Dendritic cell treated with granulocyte-macrophage colony-stimulating factor and Interleukin-4, amounts not matched to agents 40 ng/mL and 50 ng/mL, for 4 days (primary cell): ENCODE measurements at regions of chrX and their contacts with region 1.

Region 1: DNA sequence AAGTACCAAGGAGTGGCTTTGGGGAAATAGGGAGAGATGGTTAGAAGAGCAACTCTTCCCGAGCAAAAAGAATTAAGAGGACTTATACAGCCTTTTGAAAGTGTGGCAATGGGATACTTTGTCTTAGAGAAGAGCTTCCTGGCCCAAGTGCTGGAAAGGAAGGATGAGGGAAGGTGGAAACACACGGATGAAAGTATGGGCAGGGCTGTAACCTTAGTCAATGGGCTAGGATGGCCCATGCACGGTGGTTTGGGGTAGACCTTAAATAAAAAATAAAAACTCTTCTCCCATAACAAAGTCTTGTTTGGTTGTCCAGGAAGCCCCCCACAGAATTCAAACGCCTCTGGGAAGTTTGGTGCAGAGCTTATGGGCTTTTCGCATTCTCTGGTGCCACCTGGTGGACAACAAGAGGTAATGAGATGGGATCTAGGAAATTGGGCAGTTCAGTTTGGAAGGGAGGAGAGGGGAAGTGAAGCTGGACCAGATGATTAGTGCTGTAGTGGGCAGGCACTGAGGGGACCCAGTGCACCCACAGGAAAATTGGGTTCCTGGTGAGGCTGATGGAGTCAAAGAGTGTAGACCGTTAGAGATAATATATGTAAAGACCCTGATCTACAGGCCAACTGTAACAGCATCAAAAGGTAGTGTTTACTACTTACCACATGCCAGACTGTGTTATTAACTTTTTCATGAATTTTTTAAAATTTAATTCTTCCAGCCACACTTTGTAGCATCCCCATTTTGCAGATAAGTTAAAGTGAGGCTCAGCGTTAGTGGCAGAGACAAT is 13.8 kb upstream of the ENOX2 start:
- H3K4me3 Mint-ChIP-seq: no peak overlapping the region
- H3K27ac Mint-ChIP-seq: no peak overlapping the region
- H3K4me1 Mint-ChIP-seq: no peaks in the 10 kb centered on the region
- H3K27me3 Mint-ChIP-seq: peaks cover 1% of the 10 kb centered on the region

Region 2: DNA sequence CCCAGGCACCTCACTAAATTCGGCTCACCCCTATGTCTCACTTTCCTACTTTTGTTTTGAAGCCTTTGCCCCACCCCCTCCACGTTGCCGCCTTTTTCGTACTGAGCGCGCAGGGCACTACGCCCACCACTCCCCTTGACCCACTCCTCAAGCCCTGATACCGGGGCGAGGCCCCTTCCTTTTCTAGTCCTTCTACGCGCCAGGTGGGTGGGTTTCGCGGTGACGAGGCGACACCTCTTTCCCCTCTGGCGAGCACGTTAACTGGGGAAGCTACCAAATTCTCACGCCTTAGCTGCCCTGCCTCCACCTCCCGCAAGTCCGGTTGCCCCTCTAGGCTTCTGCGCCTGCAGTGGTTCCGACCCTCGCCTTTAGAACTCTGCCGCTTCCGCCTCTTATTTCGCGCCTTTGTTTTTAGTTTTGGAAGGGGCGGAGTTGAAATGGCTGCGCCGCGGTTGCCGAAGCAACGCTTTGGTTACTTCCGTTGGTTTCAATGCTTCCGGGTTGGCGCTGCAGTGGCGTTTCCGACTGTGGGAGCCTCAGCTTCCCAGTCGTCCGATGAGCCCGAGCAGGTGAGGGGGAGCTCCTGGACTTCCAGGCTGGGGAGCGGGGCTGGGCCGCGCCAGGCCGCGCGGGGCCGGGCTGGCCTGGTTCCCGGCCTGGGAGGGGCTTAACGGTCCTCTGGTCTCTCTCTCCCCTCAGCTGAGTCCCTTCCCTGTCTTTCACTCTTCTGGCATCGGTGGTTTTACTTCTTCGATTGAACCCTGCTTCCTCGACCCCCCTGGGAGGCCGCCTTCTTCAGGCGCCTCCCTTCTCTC is 577.2 kb before region 1 on chrX and contains the start of gene SLC25A14:
- intact Hi-C with region 1: loop called (anchors 5 kb)
- H3K4me3 Mint-ChIP-seq: peak within 1 kb of the TSS; percentile 96
- H3K27ac Mint-ChIP-seq: peak within 1 kb of the TSS; percentile 83
- H3K4me1 Mint-ChIP-seq: peaks cover 20% of the 10 kb centered on the region
- H3K27me3 Mint-ChIP-seq: no peaks in the 10 kb centered on the region

Region 3: DNA sequence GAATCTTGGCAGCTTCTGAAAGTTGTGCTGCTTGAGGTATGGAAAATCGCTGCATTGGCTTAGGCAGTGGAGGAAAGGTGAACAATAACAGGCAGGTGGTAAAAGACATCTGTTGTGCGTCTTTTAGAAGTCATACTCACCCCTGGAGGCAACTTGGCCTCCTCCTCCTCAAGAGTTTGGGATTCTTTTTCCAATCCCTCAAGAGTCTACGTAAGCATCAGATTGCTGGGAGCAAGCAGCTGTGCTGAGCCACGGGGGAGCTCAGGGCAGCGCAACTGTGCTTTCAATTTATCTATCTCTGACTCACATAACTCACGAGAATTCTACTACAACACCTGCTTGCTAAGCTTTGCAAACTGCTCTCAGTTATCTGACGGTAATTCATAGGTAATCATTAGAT is 521.5 kb before region 1 on chrX:
- intact Hi-C with region 1: loop called (anchors 5 kb)
- H3K4me3 Mint-ChIP-seq: no peak overlapping the region
- H3K27ac Mint-ChIP-seq: no peak overlapping the region
- H3K4me1 Mint-ChIP-seq: no peaks in the 10 kb centered on the region
- H3K27me3 Mint-ChIP-seq: peaks cover 22% of the 10 kb centered on the region

Region 4: GRCh38 chrX:130539721-130540321 is 377.0 kb before region 1 on chrX:
- intact Hi-C with region 1: loop called (anchors 2 kb)
- H3K4me3 Mint-ChIP-seq: no peak overlapping the region
- H3K27ac Mint-ChIP-seq: no peak overlapping the region
- H3K4me1 Mint-ChIP-seq: no peaks in the 10 kb centered on the region
- H3K27me3 Mint-ChIP-seq: no peaks in the 10 kb centered on the region